ENCODE measurements at regions of chr13 and their contacts with region 1.

Region 1: GRCh38 chr13:40682449-40683240 is 16.2 kb upstream of the FOXO1 start:
- DNase-seq: no peak
- ATAC-seq: peak in 1 of 2 donors; percentile 22
- H3K4me3 ChIP-seq: no peak overlapping the region
- H3K27ac ChIP-seq: peak overlapping the region in 1 of 4 donors; percentile 61
- H3K4me1 ChIP-seq: peaks cover 13 to 19% of the 10 kb centered on the region in 2 donors
- H3K27me3 ChIP-seq: no peaks in the 10 kb centered on the region
- CTCF ChIP-seq: peak; percentile 46 to 75 (median 68)
- POLR2A ChIP-seq: no peak

Region 2: GRCh38 chr13:39676315-39676876 is 1006.2 kb before region 1 on chr13:
- in situ Hi-C with region 1: loop called in 1 of 4 experiments (anchors 25 kb)
- intact Hi-C with region 1: no loop called
- DNase-seq: no peak
- ATAC-seq: no peak
- H3K4me3 ChIP-seq: no peak overlapping the region
- H3K27ac ChIP-seq: no peak overlapping the region
- H3K4me1 ChIP-seq: no peaks in the 10 kb centered on the region
- H3K27me3 ChIP-seq: no peaks in the 10 kb centered on the region
- CTCF ChIP-seq: peak in 4 of 5 experiments; percentile 15 to 45 (median 26)
- POLR2A ChIP-seq: no peak

Region 3: DNA sequence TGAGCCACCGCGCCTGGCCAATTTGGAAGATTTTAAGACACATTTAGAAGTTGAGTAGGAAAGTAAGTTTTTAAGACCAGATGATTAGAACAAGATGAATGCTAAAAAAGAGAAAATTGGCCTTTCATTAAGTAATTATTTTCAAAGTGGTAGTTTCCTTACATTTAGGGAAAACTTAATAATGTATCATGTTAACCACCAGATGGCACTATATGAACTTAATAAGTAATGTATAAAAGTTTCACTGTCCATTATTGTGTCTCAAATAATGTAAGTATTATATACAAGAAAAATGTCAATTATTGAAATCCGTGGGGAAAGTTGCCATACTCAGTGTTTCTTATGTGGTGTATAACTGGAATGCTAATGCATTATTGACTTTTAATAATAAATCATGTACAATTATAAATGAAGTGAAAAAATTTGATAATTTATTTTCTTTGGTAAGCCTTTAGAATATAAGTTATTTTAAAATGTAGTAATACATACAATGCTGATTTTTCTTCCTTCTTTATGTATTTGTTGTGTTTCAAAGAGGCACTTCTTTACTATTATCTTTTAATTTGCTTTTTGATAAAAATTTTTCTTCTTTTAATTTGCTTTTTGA is 998.0 kb before region 1 on chr13:
- in situ Hi-C with region 1: loop called in 1 of 4 experiments (anchors 25 kb)
- intact Hi-C with region 1: loop called (anchors 2 kb)
- DNase-seq: no peak
- ATAC-seq: no peak
- H3K4me3 ChIP-seq: no peak overlapping the region
- H3K27ac ChIP-seq: no peak overlapping the region
- H3K4me1 ChIP-seq: no peaks in the 10 kb centered on the region
- H3K27me3 ChIP-seq: no peaks in the 10 kb centered on the region
- CTCF ChIP-seq: peak in 4 of 5 experiments; percentile 24 to 50 (median 38)
- POLR2A ChIP-seq: no peak

Region 4: DNA sequence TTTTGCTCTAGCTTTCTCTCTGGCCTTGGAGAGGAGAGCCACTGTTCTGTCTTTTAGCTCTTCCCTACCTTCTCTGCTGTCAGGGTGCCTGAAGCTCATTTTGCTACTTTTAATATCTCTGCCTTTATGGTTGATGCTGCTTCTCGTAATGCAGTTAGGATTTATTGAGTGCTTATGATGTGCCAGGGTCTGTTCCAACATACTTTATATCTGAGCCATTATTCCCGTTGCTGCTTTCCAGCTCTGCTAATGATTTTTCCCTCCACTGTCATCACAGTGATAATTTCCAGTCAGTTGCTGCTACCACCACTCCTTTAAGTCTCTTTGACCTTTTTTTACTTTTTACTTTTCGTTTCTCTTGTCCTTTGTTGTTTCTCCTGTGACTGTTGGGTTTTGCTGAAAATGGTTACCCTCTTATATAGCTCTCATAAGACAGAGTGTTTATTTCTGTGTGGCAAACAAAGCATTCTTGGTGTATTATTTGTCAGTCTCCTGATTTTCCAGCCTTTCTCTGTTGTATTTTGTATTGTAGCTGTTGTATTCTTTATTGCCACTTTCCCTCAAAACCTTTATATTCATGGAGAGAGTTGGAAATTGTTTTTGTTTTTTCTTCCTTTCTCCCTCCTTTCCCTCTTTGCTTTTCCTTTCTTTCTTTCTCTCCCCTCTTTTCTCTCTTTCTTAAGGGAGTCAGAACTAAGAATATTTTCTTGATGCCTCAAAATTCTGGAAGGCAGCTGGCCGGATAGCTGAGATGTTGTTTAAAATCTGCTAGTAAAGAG is 989.8 kb before region 1 on chr13:
- in situ Hi-C with region 1: loop called in 3 of 4 experiments (anchors 10 to 25 kb)
- intact Hi-C with region 1: no loop called
- DNase-seq: no peak
- ATAC-seq: no peak
- H3K4me3 ChIP-seq: no peak overlapping the region
- H3K27ac ChIP-seq: no peak overlapping the region
- H3K4me1 ChIP-seq: no peaks in the 10 kb centered on the region
- H3K27me3 ChIP-seq: no peaks in the 10 kb centered on the region
- CTCF ChIP-seq: no peak
- POLR2A ChIP-seq: no peak

Region 5: DNA sequence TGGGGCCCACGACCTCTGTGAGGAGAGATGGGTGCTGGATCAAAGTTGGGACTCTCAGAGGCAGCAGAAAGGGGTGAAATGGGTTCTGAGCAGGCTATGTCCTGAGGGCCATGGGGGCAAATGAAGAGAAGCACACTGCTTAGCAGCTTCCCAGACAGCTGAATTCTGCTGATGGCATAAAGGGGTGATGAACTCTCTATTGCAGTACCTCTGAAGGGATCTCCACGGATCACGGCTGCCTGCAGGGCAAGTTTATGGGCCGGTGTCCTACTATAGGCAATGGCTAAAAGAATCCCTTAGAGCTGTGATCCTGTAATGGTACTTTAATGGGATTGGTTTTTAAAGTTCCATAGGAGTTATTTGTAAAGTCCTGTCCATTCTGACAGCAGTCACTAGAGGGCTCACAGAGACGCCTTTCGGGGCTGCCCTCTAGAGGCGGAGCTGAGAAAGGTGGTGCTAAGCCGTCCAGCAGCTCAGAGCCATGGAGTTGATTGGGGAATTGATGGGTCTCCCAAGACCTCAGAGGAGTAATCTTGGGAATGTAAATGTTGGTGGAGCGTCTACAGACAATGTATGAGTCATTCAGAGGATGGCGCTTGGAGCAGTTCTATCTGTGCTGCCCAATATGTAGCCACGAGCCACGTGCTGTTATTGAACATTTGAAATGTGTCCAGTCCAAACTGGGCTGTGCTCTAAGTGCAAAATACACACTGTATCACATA is 739.9 kb before region 1 on chr13:
- in situ Hi-C with region 1: loop called in 3 of 4 experiments (anchors 10 to 25 kb)
- intact Hi-C with region 1: loop called (anchors 2 kb)
- DNase-seq: peak; percentile 36 to 57
- ATAC-seq: peak; percentile 88 to 96
- H3K4me3 ChIP-seq: no peak overlapping the region
- H3K27ac ChIP-seq: no peak overlapping the region
- H3K4me1 ChIP-seq: no peaks in the 10 kb centered on the region
- H3K27me3 ChIP-seq: no peaks in the 10 kb centered on the region
- CTCF ChIP-seq: peak; percentile 63 to 90 (median 72)
- POLR2A ChIP-seq: no peak

Region 6: DNA sequence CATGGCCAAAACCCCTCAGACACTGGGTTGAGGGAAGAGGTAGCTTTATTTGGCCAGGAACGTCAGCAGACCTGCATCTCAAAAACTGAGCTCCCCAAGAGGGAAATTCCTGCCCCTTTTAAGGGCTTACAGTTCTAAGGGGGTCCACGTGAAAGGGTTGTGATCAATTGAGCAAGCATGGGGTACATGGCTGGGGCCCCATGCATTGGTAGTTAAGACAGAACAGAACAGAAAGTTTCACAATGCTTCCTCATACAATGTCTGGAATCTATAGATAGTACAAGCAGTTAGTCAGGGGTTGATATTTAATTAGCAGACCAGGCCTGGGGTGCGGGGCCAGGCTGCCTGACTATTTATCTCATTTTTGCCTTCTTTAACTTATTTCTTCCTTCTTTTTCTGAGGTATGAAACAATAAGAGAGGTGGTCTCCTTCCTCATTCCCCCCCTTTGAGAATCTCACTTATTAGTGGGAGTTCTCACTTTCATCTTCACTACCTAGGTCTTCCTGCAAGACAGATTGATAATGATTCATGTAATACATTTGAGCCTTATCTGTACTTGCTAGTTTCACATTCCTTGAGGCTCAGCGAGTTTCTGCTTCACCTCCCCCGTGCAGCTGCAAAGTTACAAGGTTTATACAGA is 191.6 kb after region 1 on chr13:
- in situ Hi-C with region 1: no loop called
- intact Hi-C with region 1: no loop called
- DNase-seq: no peak
- ATAC-seq: no peak
- H3K4me3 ChIP-seq: no peak overlapping the region
- H3K27ac ChIP-seq: no peak overlapping the region
- H3K4me1 ChIP-seq: no peaks in the 10 kb centered on the region
- H3K27me3 ChIP-seq: no peaks in the 10 kb centered on the region
- CTCF ChIP-seq: no peak
- POLR2A ChIP-seq: no peak